ENCODE measurements at regions of chr1 and their contacts with region 1.

Region 1: GRCh38 chr1:7783826-7784491 is at the start of gene PER3:
- DNase-seq: peak; percentile 82 to 96 (median 89)
- ATAC-seq: peak; percentile 88
- H3K4me3 ChIP-seq: peak within 1 kb of the TSS; percentile 55 to 68
- H3K4me3 Mint-ChIP-seq: peak within 1 kb of the TSS; percentile 72
- H3K27ac ChIP-seq: peak within 1 kb of the TSS; percentile 76 to 88
- H3K27ac Mint-ChIP-seq: peak within 1 kb of the TSS; percentile 60
- H3K4me1 ChIP-seq: peaks cover 27% of the 10 kb centered on the region
- H3K4me1 Mint-ChIP-seq: peaks cover 30% of the 10 kb centered on the region
- H3K27me3 ChIP-seq: no peaks in the 10 kb centered on the region
- H3K27me3 Mint-ChIP-seq: no peaks in the 10 kb centered on the region
- CTCF ChIP-seq: no peak
- total RNA-seq, gene PER3: 8.7 to 10.2 TPM

Region 2: DNA sequence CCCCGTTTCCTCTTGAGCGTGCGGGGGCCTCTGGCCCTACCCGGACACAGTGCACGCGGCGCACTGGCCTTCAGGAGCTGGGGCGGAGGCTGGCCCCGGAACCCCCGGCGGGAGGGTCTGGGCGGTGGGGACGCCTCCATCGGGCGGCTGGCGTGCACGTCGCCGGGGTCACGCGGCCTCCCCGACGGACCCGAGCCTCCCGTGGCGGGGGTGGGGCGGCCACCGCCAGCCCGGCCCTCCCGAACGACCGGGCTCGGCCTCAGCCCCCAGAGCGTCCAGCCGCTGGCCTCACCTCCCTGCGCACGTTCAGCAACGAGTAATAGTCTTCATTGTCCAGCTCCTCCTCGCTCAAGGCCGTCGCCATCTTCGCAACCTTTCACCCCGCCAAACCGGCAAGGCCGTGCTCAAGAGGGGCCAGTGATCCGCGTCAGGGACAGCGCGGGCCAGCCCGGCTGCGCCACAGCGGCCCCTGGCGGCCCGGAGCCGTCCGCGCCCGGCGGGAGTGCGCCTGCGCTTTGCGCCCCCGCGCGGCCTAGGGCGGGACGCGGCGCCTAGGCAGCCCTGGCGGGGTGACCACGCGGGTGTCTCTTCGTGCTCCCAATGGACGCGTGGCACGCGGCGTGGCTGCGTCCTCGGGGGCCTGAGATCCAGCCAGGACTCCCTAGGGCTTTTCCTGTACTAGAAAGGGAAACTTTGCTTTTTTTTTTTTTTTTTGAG is 1082.4 kb before region 1 on chr1 and contains the start of gene DNAJC11:
- CTCF ChIA-PET with region 1: no interaction called
- POLR2A ChIA-PET with region 1: no interaction called
- intact Hi-C with region 1: loop called in 1 of 2 experiments (anchors 10 kb)
- DNase-seq: peak; percentile 82 to 96 (median 89)
- ATAC-seq: peak; percentile 96
- H3K4me3 ChIP-seq: peak within 1 kb of the TSS; percentile 79 to 87
- H3K4me3 Mint-ChIP-seq: peak within 1 kb of the TSS; percentile 94
- H3K27ac ChIP-seq: peak within 1 kb of the TSS; percentile 68 to 70
- H3K27ac Mint-ChIP-seq: peak within 1 kb of the TSS; percentile 95
- H3K4me1 ChIP-seq: peaks cover 11% of the 10 kb centered on the region
- H3K4me1 Mint-ChIP-seq: peaks cover 25% of the 10 kb centered on the region
- H3K27me3 ChIP-seq: no peaks in the 10 kb centered on the region
- H3K27me3 Mint-ChIP-seq: no peaks in the 10 kb centered on the region
- CTCF ChIP-seq: peak; percentile 89
- total RNA-seq, gene DNAJC11: 23.3 to 24.4 TPM

Region 3: GRCh38 chr1:7770997-7771822 is 12.7 kb before region 1 on chr1 and contains the start of gene VAMP3:
- CTCF ChIA-PET with region 1: interaction called, 3 read pairs
- POLR2A ChIA-PET with region 1: interaction called, 4 read pairs
- intact Hi-C with region 1: loop called (anchors 1 kb)
- DNase-seq: peak; percentile 71 to 92 (median 87)
- ATAC-seq: peak; percentile 96
- H3K4me3 ChIP-seq: peak within 1 kb of the TSS; percentile 68 to 80
- H3K4me3 Mint-ChIP-seq: peak within 1 kb of the TSS; percentile 88
- H3K27ac ChIP-seq: peak within 1 kb of the TSS; percentile 60 to 74
- H3K27ac Mint-ChIP-seq: peak within 1 kb of the TSS; percentile 91
- H3K4me1 ChIP-seq: peaks cover 9% of the 10 kb centered on the region
- H3K4me1 Mint-ChIP-seq: peaks cover 42% of the 10 kb centered on the region
- H3K27me3 ChIP-seq: no peaks in the 10 kb centered on the region
- H3K27me3 Mint-ChIP-seq: peaks cover 4% of the 10 kb centered on the region
- CTCF ChIP-seq: no peak
- total RNA-seq, gene VAMP3: 76.2 to 88.1 TPM